ENCODE measurements at regions of chr15 and their contacts with region 1.

Region 1: GRCh38 chr15:70826634-70827033 is 27.3 kb downstream of the LARP6 start:
- DNase-seq: no peak

Region 2: GRCh38 chr15:70875001-70875782 is 48.6 kb after region 1 on chr15:
- intact Hi-C with region 1: loop called (anchors 5 kb)
- DNase-seq: no peak

Region 3: GRCh38 chr15:70902107-70902506 is 75.5 kb after region 1 on chr15:
- intact Hi-C with region 1: no loop called
- DNase-seq: no peak

Region 4: GRCh38 chr15:71282076-71282475 is 455.4 kb after region 1 on chr15:
- intact Hi-C with region 1: no loop called
- DNase-seq: no peak

Measured in posterior vena cava (tissue), 2 donors.